ENCODE measurements at regions of chr6 and their contacts with region 1.

Region 1: DNA sequence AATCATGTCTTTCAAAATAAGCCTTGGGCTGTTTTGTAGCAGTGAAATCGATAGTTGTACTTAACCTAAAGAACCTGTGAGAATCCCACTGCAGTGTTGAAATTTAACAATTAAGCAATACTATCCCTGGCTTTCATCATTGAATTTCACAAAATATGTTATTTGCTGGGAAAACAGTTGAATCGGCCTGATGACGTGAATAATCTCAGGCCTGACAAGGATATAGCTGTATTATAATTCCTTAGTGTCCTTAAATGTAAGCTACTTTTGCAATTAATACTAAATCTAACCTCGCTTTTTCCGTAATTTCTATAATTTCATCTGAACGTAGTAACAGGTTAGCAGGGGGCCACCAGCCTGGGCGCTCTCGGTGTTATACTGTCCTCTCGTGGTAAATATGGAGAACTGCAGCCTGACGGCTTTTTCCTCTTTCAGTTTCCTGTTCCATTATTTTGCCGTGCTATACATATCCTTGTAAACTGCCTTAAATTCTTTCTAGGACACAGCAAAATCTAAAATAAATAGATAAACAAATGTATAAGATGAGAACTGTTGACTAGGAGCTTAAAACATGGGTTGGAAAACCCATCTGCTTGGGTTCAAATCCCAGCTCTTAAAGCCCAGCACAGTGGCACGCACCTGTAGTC is 24.0 kb downstream of the MTFR2 start:
- DNase-seq: peak; percentile 24 to 29
- ATAC-seq: peak; percentile 85 to 86
- H3K4me3 ChIP-seq: peak overlapping the region; percentile 26 to 46 (median 34)
- H3K27ac ChIP-seq: peak overlapping the region in 2 of 4 donors; percentile 5 to 44
- H3K4me1 ChIP-seq: no peaks in the 10 kb centered on the region
- H3K27me3 ChIP-seq: no peaks in the 10 kb centered on the region
- CTCF ChIP-seq: peak; percentile 97 to 100 (median 100)
- POLR2A ChIP-seq: no peak

Region 2: DNA sequence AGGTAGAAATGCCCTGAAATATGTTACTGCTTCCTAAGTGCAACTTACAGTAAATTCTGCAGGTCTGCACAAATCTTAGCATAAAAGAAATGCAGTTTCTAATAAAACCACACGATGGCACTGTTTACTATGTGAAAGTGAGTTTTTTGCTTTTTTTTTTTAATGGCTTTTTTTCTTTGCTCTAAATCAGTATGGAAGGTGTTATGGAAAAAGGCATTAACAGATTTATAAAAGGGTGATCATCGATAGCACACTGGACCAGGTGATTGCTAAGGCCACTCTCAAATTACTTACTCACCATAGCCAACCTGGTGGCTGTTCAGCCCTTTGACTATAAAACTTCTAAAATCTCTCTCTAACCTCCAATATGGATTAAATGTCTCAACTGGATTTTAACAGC is 774.5 kb before region 1 on chr6:
- in situ Hi-C with region 1: loop called in 1 of 4 experiments (anchors 10 kb)
- intact Hi-C with region 1: loop called (anchors 2 kb)
- DNase-seq: no peak
- ATAC-seq: no peak
- H3K4me3 ChIP-seq: no peak overlapping the region
- H3K27ac ChIP-seq: no peak overlapping the region
- H3K4me1 ChIP-seq: no peaks in the 10 kb centered on the region
- H3K27me3 ChIP-seq: no peaks in the 10 kb centered on the region
- CTCF ChIP-seq: peak in 4 of 5 experiments; percentile 35 to 76 (median 57)
- POLR2A ChIP-seq: no peak

Region 3: GRCh38 chr6:135506270-135506997 is 719.7 kb before region 1 on chr6:
- in situ Hi-C with region 1: loop called in 1 of 4 experiments (anchors 10 kb)
- intact Hi-C with region 1: loop called (anchors 1 kb)
- DNase-seq: no peak
- ATAC-seq: no peak
- H3K4me3 ChIP-seq: no peak overlapping the region
- H3K27ac ChIP-seq: no peak overlapping the region
- H3K4me1 ChIP-seq: no peaks in the 10 kb centered on the region
- H3K27me3 ChIP-seq: no peaks in the 10 kb centered on the region
- CTCF ChIP-seq: peak; percentile 9 to 59 (median 33)
- POLR2A ChIP-seq: no peak

Region 4: GRCh38 chr6:135535989-135536414 is 690.1 kb before region 1 on chr6:
- in situ Hi-C with region 1: loop called (anchors 5 to 10 kb)
- intact Hi-C with region 1: loop called (anchors 2 kb)
- DNase-seq: no peak
- ATAC-seq: no peak
- H3K4me3 ChIP-seq: peak overlapping the region in 1 of 4 donors; percentile 12
- H3K27ac ChIP-seq: no peak overlapping the region
- H3K4me1 ChIP-seq: no peaks in the 10 kb centered on the region
- H3K27me3 ChIP-seq: no peaks in the 10 kb centered on the region
- CTCF ChIP-seq: peak; percentile 30 to 68 (median 45)
- POLR2A ChIP-seq: no peak

Region 5: GRCh38 chr6:135995545-135995898 is 230.6 kb before region 1 on chr6:
- in situ Hi-C with region 1: no loop called
- intact Hi-C with region 1: no loop called
- DNase-seq: no peak
- ATAC-seq: no peak
- H3K4me3 ChIP-seq: no peak overlapping the region
- H3K27ac ChIP-seq: no peak overlapping the region
- H3K4me1 ChIP-seq: no peaks in the 10 kb centered on the region
- H3K27me3 ChIP-seq: no peaks in the 10 kb centered on the region
- CTCF ChIP-seq: no peak
- POLR2A ChIP-seq: no peak

Region 6: GRCh38 chr6:136031982-136032381 is 194.2 kb before region 1 on chr6:
- in situ Hi-C with region 1: no loop called
- intact Hi-C with region 1: loop called (anchors 1 kb)
- DNase-seq: no peak
- ATAC-seq: no peak
- H3K4me3 ChIP-seq: no peak overlapping the region
- H3K27ac ChIP-seq: no peak overlapping the region
- H3K4me1 ChIP-seq: peaks cover 10 to 30% of the 10 kb centered on the region in 2 donors
- H3K27me3 ChIP-seq: no peaks in the 10 kb centered on the region
- CTCF ChIP-seq: peak in 1 of 5 experiments; percentile 33
- POLR2A ChIP-seq: no peak

Region 7: GRCh38 chr6:136510782-136511181 is 284.6 kb after region 1 on chr6:
- in situ Hi-C with region 1: no loop called
- intact Hi-C with region 1: no loop called
- DNase-seq: no peak
- ATAC-seq: no peak
- H3K4me3 ChIP-seq: no peak overlapping the region
- H3K27ac ChIP-seq: no peak overlapping the region
- H3K4me1 ChIP-seq: no peaks in the 10 kb centered on the region
- H3K27me3 ChIP-seq: no peaks in the 10 kb centered on the region
- CTCF ChIP-seq: no peak
- POLR2A ChIP-seq: no peak

Measured in gastrocnemius medialis (tissue), 4 donors.